Dorsolateral prefrontal cortex (tissue), 120 donors: ENCODE measurements at regions of chr14 and their contacts with region 1.

Region 1: DNA sequence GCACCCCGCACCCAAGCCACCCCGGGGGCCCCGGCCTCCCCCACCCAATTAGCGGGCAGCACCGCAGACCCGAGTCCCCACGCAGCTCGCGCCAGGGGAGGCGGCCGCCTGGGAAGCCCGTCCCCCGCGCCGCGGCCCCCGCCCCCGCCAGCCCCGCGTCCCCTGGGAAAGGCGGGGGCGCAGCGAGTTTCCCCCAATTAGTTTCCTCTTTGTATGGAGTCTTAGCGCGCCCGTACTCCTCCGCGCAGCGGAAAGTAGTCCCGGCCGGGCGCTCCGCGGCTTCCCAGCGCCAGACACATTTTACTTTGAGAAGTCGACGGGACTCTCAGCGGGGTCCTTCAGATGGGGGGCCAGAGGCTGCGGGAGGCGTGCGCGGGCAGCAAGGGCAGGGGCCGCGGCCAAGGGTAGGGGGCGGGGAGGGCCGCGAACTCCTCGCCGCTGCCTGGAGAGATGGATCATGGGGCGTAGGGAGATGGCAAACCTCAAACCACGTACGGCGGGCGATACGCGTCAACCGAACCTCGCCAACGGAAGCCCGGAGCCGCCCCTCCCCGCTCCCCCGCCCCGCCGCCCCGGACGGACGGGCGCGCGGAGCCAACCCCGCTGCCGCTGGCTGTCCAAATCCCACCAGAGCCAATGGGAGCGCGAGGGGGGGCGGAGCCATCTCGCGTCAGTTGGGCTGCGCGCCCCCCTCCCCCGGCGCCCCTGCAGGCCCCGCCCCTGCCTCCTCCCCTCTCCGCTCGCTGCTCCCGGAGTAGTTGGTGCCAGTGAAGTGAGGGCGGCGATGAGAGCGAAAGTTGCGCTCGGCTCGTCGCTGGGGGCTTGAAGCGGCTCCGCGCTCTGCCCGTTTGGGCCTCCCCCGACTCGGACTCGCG is at the start of gene RCOR1:
- DNase-seq: peak; percentile 96 to 99 (median 98)
- H3K4me3 ChIP-seq: peak within 1 kb of the TSS; percentile 64 to 98 (median 90)
- H3K27ac ChIP-seq: peak within 1 kb of the TSS; percentile 70 to 99 (median 95)
- H3K27me3 ChIP-seq: no peaks in the 10 kb centered on the region
- CTCF ChIP-seq: peak in 25 of 56 donors; percentile 7 to 55 (median 20)
- total RNA-seq, gene RCOR1: 8.6 to 24.0 (median 13.3) TPM

Region 2: GRCh38 chr14:101761032-101761880 is 830.9 kb before region 1 on chr14 and contains the start of gene PPP2R5C:
- intact Hi-C with region 1: loop called in 1 of 2 experiments (anchors 10 kb)
- DNase-seq: peak; percentile 82 to 93 (median 90)
- H3K4me3 ChIP-seq: peak within 1 kb of the TSS; percentile 74 to 100 (median 97)
- H3K27ac ChIP-seq: peak within 1 kb of the TSS; percentile 68 to 100 (median 96)
- H3K27me3 ChIP-seq: no peaks in the 10 kb centered on the region
- CTCF ChIP-seq: no peak
- total RNA-seq, gene PPP2R5C: 150 to 242 (median 182) TPM

Region 3: GRCh38 chr14:102362545-102363181 is 229.5 kb before region 1 on chr14 and contains the starts of genes CINP and TECPR2:
- intact Hi-C with region 1: loop called (anchors 10 kb)
- DNase-seq: peak; percentile 99 to 100 (median 99)
- H3K4me3 ChIP-seq: peak within 1 kb of the TSS; percentile 66 to 98 (median 88)
- H3K27ac ChIP-seq: peak within 1 kb of the TSS; percentile 72 to 100 (median 98)
- H3K27me3 ChIP-seq: no peaks in the 10 kb centered on the region
- CTCF ChIP-seq: peak in 12 of 56 donors; percentile 7 to 46 (median 18)
- total RNA-seq, gene CINP: 31.4 to 69.6 (median 51.2) TPM
- total RNA-seq, gene TECPR2: 54.3 to 129 (median 78.9) TPM

Region 4: DNA sequence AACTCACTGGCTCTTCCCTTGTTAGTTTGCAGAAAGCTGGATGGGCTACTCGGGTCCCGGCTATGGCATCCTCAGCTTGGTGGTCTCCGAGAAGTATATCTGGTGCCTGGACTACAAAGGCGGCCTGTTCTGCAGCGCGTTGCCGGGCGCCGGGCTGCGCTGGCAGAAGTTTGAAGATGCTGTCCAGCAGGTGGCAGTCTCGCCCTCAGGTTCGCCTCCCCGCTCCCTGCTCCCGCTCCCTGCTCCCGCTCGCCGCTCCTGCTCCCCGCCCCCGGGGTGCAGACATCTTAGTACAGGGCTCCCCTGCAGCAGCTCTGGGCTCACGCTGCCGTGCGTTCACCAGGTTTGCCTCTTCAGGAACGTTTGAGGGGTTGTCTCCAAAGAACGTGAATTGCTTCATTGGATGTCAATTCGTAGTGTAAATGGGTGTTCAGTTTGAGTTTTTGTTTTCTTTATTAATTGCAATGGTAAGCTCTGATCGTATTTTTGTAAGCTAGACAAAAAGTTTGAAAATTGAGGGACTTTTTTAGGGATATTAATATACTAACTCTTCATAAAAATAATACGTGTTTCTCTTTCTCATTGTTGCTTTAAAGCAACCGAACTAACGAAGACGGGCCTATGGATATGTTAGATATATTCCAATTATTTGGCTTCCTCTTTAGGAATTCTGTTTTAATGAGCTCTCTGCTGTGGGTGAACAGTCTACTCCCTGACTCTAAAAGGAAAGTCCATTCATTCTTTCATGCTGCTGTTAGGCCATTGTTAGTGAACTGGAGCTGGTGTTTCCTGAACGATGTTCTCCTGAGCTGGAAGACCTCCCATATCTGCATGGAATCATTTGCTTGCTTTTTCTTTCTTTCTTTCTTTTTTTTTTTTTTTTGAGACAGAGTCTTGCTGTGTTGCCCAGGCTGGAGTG is 153.9 kb before region 1 on chr14:
- intact Hi-C with region 1: loop called (anchors 5 kb)
- DNase-seq: peak; percentile 84 to 94 (median 90)
- H3K4me3 ChIP-seq: peak overlapping the region in 57 of 59 donors; percentile 2 to 63 (median 43)
- H3K27ac ChIP-seq: peak overlapping the region in 57 of 59 donors; percentile 9 to 92 (median 78)
- H3K27me3 ChIP-seq: no peaks in the 10 kb centered on the region
- CTCF ChIP-seq: peak; percentile 74 to 97 (median 92)

Region 5: DNA sequence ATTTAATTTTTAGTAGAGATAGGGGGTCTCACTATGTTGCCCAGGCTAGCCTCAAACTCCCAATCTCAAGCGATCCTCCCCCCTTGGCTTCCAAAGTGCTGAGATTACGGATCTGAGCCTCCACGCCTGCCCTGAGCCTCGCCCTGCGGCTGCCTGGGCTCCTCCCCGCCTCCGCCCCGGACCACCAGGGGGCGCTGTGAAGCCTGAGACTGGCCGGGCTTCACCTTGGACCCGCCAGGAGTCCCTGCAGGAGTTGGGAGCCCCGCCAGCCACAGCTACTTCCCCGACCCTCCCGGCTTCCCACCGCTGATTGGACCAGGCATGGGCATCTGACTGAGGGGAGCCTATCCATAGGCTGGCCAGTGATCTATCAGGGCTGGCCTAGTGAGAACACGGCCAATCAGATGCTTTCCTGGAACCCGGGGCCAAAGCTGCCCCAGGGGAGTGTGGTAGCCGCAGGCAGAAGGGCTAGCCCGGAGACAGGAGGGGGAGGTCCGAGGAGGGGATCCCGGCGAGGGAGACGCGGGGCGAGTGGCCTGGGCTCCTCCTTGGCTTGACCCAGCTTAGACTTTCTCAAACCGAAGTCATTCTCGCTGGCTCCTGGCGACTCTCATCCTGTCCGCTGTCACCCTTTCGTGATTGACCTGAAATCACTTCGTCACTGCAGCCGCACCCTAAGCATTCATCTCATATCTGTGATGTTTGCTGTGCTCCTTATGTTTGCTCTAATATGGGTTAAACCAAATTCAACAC is 67.5 kb before region 1 on chr14:
- intact Hi-C with region 1: loop called (anchors 5 kb)
- DNase-seq: peak; percentile 93 to 99 (median 97)
- H3K4me3 ChIP-seq: peak overlapping the region; percentile 46 to 87 (median 71)
- H3K27ac ChIP-seq: peak overlapping the region; percentile 13 to 94 (median 80)
- H3K27me3 ChIP-seq: no peaks in the 10 kb centered on the region
- CTCF ChIP-seq: peak; percentile 87 to 99 (median 97)

Region 6: GRCh38 chr14:102694530-102695166 is 102.5 kb after region 1 on chr14:
- intact Hi-C with region 1: loop called in 1 of 2 experiments (anchors 10 kb)
- DNase-seq: peak in 5 of 10 donors; percentile 36 to 72 (median 55)
- H3K4me3 ChIP-seq: peak overlapping the region in 2 of 59 donors; percentile 4 to 7
- H3K27ac ChIP-seq: peak overlapping the region in 1 of 59 donors; percentile 21
- H3K27me3 ChIP-seq: no peaks in the 10 kb centered on the region
- CTCF ChIP-seq: peak; percentile 56 to 94 (median 84)

Region 7: GRCh38 chr14:103057365-103058096 is 465.4 kb after region 1 on chr14 and contains the start of gene CDC42BPB:
- intact Hi-C with region 1: loop called in 1 of 2 experiments (anchors 5 kb)
- DNase-seq: peak; percentile 64 to 93 (median 82)
- H3K4me3 ChIP-seq: peak within 1 kb of the TSS; percentile 81 to 100 (median 95)
- H3K27ac ChIP-seq: peak within 1 kb of the TSS; percentile 51 to 94 (median 86)
- H3K27me3 ChIP-seq: no peaks in the 10 kb centered on the region
- CTCF ChIP-seq: peak in 21 of 56 donors; percentile 5 to 40 (median 17)
- total RNA-seq, gene CDC42BPB: 112 to 178 (median 140) TPM